ENCODE measurements at regions of chr4 and their contacts with region 1.

Region 1: DNA sequence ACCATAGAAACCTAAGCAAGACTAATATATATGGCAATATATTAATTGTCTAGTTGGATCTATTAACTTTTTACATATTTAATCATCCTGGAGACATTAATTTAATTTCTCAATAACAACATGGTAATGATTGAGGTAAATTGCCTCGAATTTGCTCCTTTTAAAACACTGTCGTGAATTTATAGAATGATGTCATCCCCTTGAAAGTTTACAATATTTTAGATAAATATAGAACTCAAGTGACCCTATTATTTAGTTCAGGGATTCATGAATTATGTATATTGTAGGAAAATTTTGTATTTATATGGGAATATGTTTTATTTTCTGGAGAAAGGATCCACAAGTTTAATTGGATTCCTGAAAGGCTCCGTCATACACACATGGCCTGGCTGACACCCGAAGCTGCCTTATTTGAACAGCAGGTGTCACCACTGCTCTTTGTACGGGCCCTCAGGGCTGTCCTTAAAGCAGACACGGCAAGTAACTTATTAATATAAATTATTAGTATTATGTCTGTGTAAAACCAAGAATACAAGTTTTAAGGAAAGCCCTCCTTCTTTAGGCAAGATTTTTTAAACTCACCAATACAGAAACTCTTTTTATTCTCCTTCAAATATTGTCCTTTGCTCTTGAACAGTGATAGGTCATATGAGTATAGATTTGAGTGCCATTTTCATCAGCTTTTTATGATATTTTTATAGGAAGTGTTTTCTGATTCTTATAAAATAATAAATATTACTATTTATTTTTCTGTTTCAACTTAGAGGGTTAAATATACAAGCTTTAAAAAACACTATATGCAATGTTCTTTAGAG is 1.9 kb upstream of the PLRG1 start:
- DNase-seq: peak; percentile 77
- ATAC-seq: peak; percentile 79

Region 2: GRCh38 chr4:154618708-154619315 is 66.7 kb after region 1 on chr4:
- intact Hi-C with region 1: loop called (anchors 5 kb)
- DNase-seq: peak; percentile 42
- ATAC-seq: no peak

Region 3: DNA sequence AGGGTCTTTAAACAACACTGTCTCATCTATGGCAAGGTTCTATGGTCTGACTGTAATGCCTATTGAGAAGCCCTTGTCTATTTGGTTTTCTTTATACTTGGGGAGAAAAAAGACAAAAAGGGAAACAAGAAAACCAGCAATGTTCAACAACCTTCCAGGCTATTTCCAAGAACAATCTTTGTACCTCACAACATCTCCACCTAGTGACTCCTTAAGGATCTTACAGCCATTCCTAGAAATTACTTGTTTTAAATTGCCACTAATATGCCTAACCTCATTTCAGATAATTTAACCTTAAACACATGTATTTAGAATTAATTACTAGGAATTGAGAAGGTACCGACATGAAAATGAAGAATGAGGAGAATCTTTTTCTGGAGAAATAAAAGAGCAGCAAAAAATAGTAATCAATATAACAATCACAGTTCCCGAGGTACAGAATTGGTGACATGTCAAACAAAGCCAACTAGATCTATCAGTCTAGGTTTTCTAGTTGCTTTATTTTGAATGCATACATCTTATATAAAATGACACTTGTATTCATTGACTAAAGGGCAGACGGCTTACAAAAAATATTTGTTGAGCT is 227.4 kb after region 1 on chr4:
- intact Hi-C with region 1: loop called (anchors 10 kb)
- DNase-seq: no peak
- ATAC-seq: no peak